ENCODE measurements at regions of chr16 and their contacts with region 1.

Region 1: DNA sequence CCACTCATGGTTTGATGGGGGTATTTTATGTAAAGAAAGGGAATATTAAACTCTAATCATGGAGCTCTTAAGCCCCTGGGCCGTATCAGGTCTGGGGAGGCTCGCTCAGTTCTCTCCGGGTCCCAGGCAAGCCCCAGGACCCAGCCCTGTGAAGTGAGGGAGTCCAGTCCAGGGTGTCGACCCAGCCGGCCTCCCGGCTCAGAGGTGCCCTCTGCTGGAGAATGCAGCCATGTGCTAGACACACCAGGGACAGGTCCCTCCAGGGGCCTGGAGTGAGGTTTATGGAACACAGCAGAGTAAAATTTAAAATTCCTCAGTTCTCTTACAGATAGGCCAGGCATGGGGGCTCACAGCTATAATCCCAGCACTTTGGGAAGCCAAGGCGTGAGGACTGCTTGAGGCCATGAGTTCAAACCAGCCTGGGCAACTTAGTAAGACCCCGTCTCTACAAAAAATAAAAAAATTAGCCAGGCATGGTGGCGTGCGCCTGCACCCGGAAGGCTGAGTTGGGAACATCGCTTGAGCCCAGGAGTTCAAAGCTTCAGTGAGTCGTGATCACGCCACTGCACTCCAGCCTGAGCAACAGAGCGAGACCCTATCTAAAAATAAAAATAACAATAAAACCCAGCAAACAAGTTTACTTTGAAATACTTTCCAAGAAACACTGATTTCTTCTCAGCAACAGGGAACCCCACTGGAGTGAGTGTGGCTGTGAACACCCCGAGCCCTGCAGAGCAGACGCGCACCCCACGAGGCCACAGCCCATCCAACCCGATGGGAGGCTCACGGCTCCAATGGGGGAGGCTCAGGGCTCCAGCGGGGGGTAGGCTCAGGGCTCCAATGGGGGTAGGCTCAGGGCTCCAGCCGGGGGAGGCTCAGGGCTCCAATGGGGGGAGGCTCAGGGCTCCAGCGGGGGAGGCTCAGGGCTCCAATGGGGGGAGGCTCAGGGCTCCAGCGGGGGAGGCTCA is 72.2 kb downstream of the ZNF778 start:
- DNase-seq: no peak
- H3K4me3 ChIP-seq: no peak overlapping the region
- CTCF ChIP-seq: peak; percentile 92

Region 2: DNA sequence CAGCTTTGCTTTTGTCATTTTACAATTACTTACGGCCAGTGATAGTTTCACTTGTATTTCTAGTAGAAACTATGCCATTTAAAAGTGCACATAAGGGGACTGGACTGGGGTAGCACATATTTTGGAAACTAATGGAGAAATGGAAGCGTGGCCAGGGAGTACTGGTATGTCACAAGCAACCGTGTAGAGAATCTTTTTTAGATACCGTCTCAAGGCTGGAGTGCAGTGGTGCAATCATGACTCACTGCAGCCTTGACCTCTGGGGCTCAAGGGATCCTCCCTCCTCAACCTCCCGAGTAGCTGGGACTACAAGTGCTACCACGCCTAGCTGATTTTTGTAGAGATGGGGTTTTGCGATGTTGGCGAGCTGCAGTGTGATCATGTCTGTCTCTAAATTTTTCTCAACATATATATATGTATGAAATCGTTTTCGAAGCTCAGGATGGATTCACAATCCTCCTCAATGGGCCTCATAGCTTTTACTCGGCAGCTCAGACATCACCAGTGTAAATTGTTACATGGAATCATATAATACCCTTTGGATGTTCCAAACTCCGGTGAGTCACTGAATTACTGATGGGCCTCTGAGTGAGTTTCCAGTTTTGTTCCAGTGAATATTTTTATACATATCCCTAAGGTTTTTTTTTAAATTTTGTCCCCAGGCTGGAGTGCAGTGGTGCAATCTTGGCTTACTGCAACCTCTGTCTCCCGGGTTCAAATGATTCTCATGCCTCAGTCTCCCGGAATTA is 20.6 kb before region 1 on chr16:
- CTCF ChIA-PET with region 1: interaction called, 21 read pairs
- POLR2A ChIA-PET with region 1: no interaction called
- DNase-seq: no peak
- H3K4me3 ChIP-seq: no peak overlapping the region
- CTCF ChIP-seq: no peak

Region 3: DNA sequence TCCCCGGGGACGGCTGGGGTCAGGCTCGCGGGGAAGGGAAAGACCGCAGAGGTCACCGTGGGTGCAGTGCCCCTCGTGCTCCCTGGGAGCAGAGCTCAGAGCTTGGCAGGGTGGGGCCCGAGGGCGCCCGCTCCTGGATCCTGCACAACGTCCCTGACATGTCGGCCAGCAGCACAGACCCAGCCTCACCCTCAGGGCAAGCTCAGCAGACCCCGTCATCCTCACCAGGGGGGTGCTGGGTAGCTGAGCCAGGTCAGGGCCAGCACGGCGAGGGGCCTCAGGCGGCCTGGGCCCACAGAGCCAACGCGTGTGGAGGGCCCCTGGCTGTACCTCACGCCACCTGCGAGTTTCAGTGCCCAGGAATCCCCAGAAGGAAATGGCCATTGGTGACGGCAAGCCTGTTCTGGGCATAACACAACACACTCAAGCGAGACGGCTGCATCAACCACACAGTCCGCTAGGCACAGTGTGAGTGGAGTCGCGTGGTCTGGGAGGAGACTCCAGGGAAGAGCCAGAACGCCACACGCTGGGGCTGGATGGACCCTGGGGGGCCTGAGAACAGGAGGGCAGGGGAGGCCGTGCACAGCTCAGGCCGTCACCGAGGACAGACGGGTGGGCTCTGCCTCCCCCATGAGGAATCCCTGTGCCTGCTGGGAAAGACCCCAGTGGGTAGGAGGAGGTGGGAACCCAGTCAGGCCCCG is 11.9 kb before region 1 on chr16:
- CTCF ChIA-PET with region 1: interaction called, 21 read pairs
- POLR2A ChIA-PET with region 1: no interaction called
- DNase-seq: no peak
- H3K4me3 ChIP-seq: no peak overlapping the region
- CTCF ChIP-seq: no peak

Region 4: DNA sequence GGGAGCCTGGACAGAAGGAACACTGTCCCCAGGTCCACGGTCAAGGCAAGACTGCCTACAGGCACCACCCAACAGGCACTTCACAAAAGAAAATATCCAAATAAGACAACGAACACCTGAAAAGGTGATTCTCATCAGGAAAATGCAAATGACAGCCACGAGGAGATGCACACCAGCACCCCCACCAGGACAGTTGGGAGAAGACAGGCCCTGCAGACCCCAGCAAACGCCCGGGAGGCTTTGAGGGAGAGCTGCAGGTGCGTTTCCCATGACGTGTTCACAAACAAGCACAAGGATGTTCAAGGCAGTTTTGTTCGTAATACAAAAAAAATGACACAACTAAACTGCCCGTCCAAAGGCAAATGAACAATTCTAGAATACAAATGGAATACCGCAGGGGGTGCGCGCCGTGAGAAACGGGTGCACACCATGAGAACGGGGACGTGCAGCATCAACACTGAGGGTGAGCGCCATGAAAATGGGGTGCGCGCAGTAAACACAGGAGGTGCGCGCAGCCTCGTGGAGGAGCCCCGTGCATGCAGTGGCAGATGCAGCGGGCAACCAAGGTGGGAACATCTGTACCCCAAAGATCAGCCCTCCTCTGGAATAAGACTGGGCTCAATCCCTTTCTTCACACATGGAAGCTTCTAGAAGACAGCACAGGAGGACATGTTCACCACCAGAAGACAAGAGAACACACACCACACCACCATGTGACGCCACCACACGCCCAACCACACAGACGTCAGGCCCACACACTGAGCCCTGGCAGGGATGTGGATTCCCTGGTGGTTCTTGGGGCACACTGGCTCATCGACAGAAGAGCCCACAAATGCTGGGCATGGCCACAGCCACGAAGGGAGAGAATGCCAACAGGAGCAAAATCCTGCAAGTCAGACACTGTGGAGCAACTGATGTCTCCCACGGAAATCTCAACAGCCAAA is 18.9 kb after region 1 on chr16:
- CTCF ChIA-PET with region 1: interaction called, 21 read pairs
- POLR2A ChIA-PET with region 1: no interaction called
- DNase-seq: no peak
- H3K4me3 ChIP-seq: no peak overlapping the region
- CTCF ChIP-seq: peak; percentile 36

Region 5: GRCh38 chr16:89507834-89508590 is 218.3 kb after region 1 on chr16 and contains the start of gene SPG7:
- CTCF ChIA-PET with region 1: interaction called, 34 read pairs
- POLR2A ChIA-PET with region 1: no interaction called
- DNase-seq: no peak
- H3K4me3 ChIP-seq: peak within 1 kb of the TSS; percentile 63
- CTCF ChIP-seq: no peak

Measured in AG04449 (cell line).